OCI-LY7 (cell line): ENCODE measurements at regions of chr1 and their contacts with region 1.

Region 1: GRCh38 chr1:17335821-17336710 is 28.1 kb downstream of the PADI4 start:
- DNase-seq: peak; percentile 61
- H3K4me3 ChIP-seq: no peak overlapping the region
- H3K27ac ChIP-seq: no peak overlapping the region
- H3K4me1 ChIP-seq: no peaks in the 10 kb centered on the region
- CTCF ChIP-seq: peak; percentile 98

Region 2: GRCh38 chr1:17053685-17054410 is 282.2 kb before region 1 on chr1 and contains the start of gene SDHB:
- CTCF ChIA-PET with region 1: no interaction called
- POLR2A ChIA-PET with region 1: no interaction called
- intact Hi-C with region 1: loop called (anchors 10 kb)
- DNase-seq: peak; percentile 98
- H3K4me3 ChIP-seq: peak within 1 kb of the TSS; percentile 93
- H3K27ac ChIP-seq: peak within 1 kb of the TSS; percentile 27
- H3K4me1 ChIP-seq: peaks cover 20% of the 10 kb centered on the region
- CTCF ChIP-seq: no peak
- total RNA-seq, gene SDHB: 103 and 106 TPM in 2 replicates

Region 3: GRCh38 chr1:17125756-17126237 is 210.3 kb before region 1 on chr1:
- CTCF ChIA-PET with region 1: no interaction called
- POLR2A ChIA-PET with region 1: no interaction called
- intact Hi-C with region 1: loop called (anchors 2 kb)
- DNase-seq: peak; percentile 76
- H3K4me3 ChIP-seq: no peak overlapping the region
- H3K27ac ChIP-seq: no peak overlapping the region
- H3K4me1 ChIP-seq: peaks cover 5% of the 10 kb centered on the region
- CTCF ChIP-seq: peak; percentile 92